Right ventricle myocardium superior (tissue), 1 donor: ENCODE measurements at regions of chr10 and their contacts with region 1.

Region 1: GRCh38 chr10:80500572-80501380 is 36.9 kb upstream of the SH2D4B start:
- DNase-seq: peak; percentile 79
- ATAC-seq: peak; percentile 18

Region 2: GRCh38 chr10:80382989-80383388 is 117.8 kb before region 1 on chr10:
- intact Hi-C with region 1: loop called (anchors 5 kb)
- DNase-seq: no peak
- ATAC-seq: no peak

Region 3: DNA sequence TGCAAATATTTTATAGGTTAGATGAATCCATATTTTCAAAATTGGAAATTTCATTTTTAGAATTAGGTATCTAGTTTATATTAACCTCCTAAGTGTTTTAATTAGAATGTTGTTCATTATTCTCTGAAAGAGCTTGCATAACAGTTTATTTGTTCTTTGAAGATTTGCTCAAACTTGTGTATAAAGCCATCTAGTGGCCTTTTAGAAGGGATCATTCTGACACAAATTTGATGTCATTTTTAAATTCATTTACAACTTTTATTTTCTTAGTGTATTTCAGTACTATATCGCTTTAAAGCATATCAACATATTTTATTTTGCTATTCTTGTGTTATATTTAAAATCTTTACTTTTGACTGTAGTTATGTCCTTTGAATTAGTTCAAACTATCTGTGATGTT is 847.2 kb after region 1 on chr10:
- intact Hi-C with region 1: no loop called
- DNase-seq: no peak
- ATAC-seq: no peak